H1 (cell line): ENCODE measurements at regions of chr11 and their contacts with region 1.

Region 1: DNA sequence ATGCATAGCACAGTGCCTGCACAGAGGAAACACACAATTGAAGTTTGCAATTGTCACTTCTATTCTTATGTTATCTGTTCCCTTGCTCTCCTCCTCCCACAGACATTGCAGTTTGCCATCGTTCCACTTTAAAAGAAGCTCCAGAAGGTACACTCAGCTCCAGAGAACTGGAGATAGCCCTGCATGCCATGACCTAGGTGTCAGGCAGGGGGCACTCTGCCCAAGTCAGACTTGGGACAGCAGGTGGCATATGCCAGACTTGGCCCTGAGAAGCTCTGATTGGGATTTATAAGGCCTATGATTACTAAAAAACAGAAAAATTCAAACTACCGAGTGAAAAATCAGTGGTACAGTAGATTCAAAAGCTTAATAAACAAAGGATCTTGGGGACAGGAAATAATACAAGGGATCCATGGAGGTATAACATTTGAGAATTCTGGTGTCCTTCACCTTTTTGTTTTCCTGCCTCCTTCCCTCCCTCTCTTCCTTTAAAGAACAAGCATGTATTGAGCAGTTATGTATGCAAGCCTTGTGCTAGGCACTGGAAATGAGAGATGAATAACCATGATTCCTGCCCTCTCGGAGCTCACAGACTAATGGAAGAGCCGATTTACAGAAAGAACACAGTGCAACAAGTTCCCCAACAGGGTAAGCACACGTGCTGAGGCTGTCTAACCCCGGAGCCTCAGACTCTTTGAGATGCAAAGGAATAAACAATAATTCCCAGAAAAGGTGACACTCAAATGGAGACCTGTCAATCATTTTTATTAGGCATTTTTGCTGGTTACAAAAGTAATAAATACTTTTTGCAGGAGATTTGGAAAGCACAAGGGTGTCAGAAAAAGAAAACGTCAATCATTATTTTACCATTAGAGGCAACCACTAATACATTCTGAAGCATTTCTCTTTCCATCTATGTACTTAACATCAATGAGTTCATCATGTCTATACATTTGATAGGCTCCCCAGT is 39.8 kb downstream of the TENM4 start:
- DNase-seq: peak in 1 of 2 experiments; percentile 75
- H3K4me3 ChIP-seq: no peak overlapping the region
- H3K27ac ChIP-seq: no peak overlapping the region
- H3K4me1 ChIP-seq: peaks cover 0 to 2% (median 0%) of the 10 kb centered on the region in 4 experiments; a peak in 1 of 7 replicates
- H3K27me3 ChIP-seq: no peaks in the 10 kb centered on the region
- CTCF ChIP-seq: peak; percentile 92 to 93 (median 92)
- EP300 ChIP-seq: no peak
- POLR2A ChIP-seq: no peak
- RAD21 ChIP-seq: peak; percentile 84 to 89

Region 2: DNA sequence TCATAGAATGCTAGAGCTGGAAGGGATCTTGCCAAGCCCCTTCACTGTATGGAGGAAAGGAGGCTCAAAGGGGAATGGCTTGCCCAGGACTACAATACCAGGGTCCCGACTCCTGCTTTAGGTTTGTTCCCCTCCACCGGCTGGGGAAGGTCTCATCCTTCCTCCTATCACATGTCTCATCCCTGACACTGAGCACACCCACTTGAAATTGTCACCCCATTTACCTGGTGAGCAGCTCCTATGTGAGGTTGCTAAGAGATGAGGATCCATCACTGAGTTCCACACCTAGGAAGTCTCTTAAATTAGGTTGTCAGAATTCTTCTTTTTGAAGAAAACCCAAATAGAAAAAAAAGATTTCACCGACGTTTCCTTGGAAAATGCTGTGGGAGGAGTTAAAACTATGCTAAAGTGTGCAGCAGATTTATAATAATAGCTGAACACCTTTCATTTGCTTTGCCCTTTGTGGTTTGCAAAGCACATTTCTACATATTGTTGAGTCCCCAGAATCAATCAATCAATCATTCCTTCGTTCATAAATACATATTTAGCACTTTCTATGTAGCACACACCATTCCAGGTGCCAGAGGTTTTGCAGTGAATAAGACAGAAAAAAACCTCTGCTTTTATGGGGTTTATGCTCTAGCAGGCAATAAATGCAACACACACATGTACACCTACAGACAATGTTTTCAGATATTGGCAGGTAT is 51.9 kb before region 1 on chr11:
- CTCF ChIA-PET with region 1: no interaction called
- POLR2A ChIA-PET with region 1: no interaction called
- DNase-seq: no peak
- H3K4me3 ChIP-seq: no peak overlapping the region
- H3K27ac ChIP-seq: no peak overlapping the region
- H3K4me1 ChIP-seq: peaks cover 0 to 3% (median 0%) of the 10 kb centered on the region in 4 experiments; a peak in 1 of 7 replicates
- H3K27me3 ChIP-seq: no peaks in the 10 kb centered on the region
- CTCF ChIP-seq: no peak
- EP300 ChIP-seq: no peak
- POLR2A ChIP-seq: no peak
- RAD21 ChIP-seq: no peak

Region 3: DNA sequence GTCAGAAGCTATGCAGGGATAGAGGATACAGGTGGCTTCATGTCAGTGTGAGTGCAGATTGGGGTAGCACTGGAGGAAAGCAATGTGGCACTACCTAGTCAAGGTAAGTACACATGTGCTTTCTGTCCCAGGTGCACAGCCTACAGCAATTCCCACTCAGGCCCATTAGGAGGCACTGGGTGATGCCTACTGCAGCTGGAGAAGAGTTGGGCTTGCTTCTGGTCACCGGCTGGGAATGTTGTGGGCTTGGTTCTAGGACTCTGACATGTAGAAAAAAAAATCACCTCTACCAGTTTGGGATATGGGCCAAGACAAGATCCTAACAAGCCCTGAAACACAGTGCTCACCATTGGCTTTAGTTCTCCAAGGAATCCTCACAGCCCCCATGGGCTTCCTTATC is 29.9 kb before region 1 on chr11:
- CTCF ChIA-PET with region 1: interaction called, 12 read pairs
- POLR2A ChIA-PET with region 1: no interaction called
- DNase-seq: no peak
- H3K4me3 ChIP-seq: no peak overlapping the region
- H3K27ac ChIP-seq: no peak overlapping the region
- H3K4me1 ChIP-seq: peaks cover 0 to 14% (median 7%) of the 10 kb centered on the region in 4 experiments; a peak in 3 of 7 replicates
- H3K27me3 ChIP-seq: no peaks in the 10 kb centered on the region
- CTCF ChIP-seq: peak; percentile 18 to 50 (median 44); a peak in 3 of 4 replicates
- EP300 ChIP-seq: no peak
- POLR2A ChIP-seq: no peak
- RAD21 ChIP-seq: peak; percentile 38 to 62

Region 4: GRCh38 chr11:79419120-79419519 is 18.1 kb after region 1 on chr11:
- CTCF ChIA-PET with region 1: interaction called, 56 read pairs
- POLR2A ChIA-PET with region 1: no interaction called
- DNase-seq: no peak
- H3K4me3 ChIP-seq: no peak overlapping the region
- H3K27ac ChIP-seq: no peak overlapping the region
- H3K4me1 ChIP-seq: 0 out of 7 replicates have a peak, but pooled peaks cover 0 to 2% (median under 1%) of the 10 kb centered on the region in 4 experiments
- H3K27me3 ChIP-seq: no peaks in the 10 kb centered on the region; a peak in 1 of 7 replicates
- CTCF ChIP-seq: no peak
- EP300 ChIP-seq: no peak
- POLR2A ChIP-seq: no peak
- RAD21 ChIP-seq: no peak

Region 5: GRCh38 chr11:79440441-79441194 is 39.6 kb after region 1 on chr11 and contains the start of gene TENM4:
- CTCF ChIA-PET with region 1: interaction called, 20 read pairs
- POLR2A ChIA-PET with region 1: no interaction called
- DNase-seq: peak in 1 of 2 experiments; percentile 69
- H3K4me3 ChIP-seq: peak within 1 kb of the TSS; percentile 56 to 80 (median 63)
- H3K27ac ChIP-seq: no peak within 1 kb of the TSS
- H3K4me1 ChIP-seq: peaks cover 0 to 15% (median 10%) of the 10 kb centered on the region in 4 experiments; a peak in 6 of 7 replicates
- H3K27me3 ChIP-seq: peaks cover 12 to 64% (median 54%) of the 10 kb centered on the region in 4 experiments
- CTCF ChIP-seq: peak; percentile 46 to 61 (median 56)
- EP300 ChIP-seq: no peak
- POLR2A ChIP-seq: no peak
- RAD21 ChIP-seq: peak in 1 of 2 experiments; percentile 41; a peak in 2 of 4 replicates
- total RNA-seq, gene TENM4: 7.2 and 8.8 TPM in 2 replicates

Region 6: GRCh38 chr11:79482800-79483199 is 81.8 kb after region 1 on chr11:
- CTCF ChIA-PET with region 1: interaction called, 15 read pairs
- POLR2A ChIA-PET with region 1: no interaction called
- DNase-seq: no peak
- H3K4me3 ChIP-seq: no peak overlapping the region
- H3K27ac ChIP-seq: no peak overlapping the region
- H3K4me1 ChIP-seq: peaks cover 10 to 17% (median 13%) of the 10 kb centered on the region in 4 experiments
- H3K27me3 ChIP-seq: no peaks in the 10 kb centered on the region; a peak in 2 of 7 replicates
- CTCF ChIP-seq: no peak
- EP300 ChIP-seq: no peak
- POLR2A ChIP-seq: no peak
- RAD21 ChIP-seq: no peak

Region 7: GRCh38 chr11:79503028-79503427 is 102.0 kb after region 1 on chr11:
- CTCF ChIA-PET with region 1: interaction called, 10 read pairs
- POLR2A ChIA-PET with region 1: no interaction called
- DNase-seq: no peak
- H3K4me3 ChIP-seq: no peak overlapping the region
- H3K27ac ChIP-seq: no peak overlapping the region
- H3K4me1 ChIP-seq: peaks cover 0 to 2% (median 0%) of the 10 kb centered on the region in 4 experiments; a peak in 2 of 7 replicates
- H3K27me3 ChIP-seq: peaks cover 0 to 2% (median 0%) of the 10 kb centered on the region in 4 experiments; a peak in 1 of 7 replicates
- CTCF ChIP-seq: no peak
- EP300 ChIP-seq: no peak
- POLR2A ChIP-seq: no peak
- RAD21 ChIP-seq: no peak

Region 8: GRCh38 chr11:79697905-79698304 is 296.9 kb after region 1 on chr11:
- CTCF ChIA-PET with region 1: no interaction called
- POLR2A ChIA-PET with region 1: no interaction called
- DNase-seq: no peak
- H3K4me3 ChIP-seq: no peak overlapping the region
- H3K27ac ChIP-seq: no peak overlapping the region
- H3K4me1 ChIP-seq: no peaks in the 10 kb centered on the region
- H3K27me3 ChIP-seq: no peaks in the 10 kb centered on the region
- CTCF ChIP-seq: no peak
- EP300 ChIP-seq: no peak
- POLR2A ChIP-seq: no peak
- RAD21 ChIP-seq: no peak

Region 9: DNA sequence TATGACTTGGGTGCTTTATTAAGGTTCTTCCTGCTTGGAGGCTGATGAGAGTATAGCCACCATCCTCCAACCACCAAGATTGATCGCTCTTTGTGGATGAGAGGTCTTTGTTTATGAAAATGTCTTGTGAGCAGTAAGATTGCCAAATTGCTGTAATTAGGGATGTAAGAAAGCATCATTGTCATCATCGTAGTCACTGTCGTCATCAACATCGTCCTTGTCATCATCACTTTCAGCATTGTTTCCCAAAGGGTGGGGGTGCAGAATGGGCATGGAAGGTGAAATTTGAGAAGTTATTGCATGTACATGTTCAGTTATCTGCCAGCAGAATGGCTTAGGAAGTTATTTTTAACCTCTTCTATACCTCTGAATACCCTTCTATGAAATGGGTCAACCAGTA is 479.3 kb after region 1 on chr11:
- CTCF ChIA-PET with region 1: no interaction called
- POLR2A ChIA-PET with region 1: no interaction called
- DNase-seq: no peak
- H3K4me3 ChIP-seq: no peak overlapping the region
- H3K27ac ChIP-seq: no peak overlapping the region
- H3K4me1 ChIP-seq: no peaks in the 10 kb centered on the region
- H3K27me3 ChIP-seq: no peaks in the 10 kb centered on the region
- CTCF ChIP-seq: no peak
- EP300 ChIP-seq: no peak
- POLR2A ChIP-seq: no peak
- RAD21 ChIP-seq: no peak